ENCODE measurements at regions of chr17 and their contacts with region 1.

Region 1: GRCh38 chr17:41369713-41370112 is at the start of gene KRT33B:
- DNase-seq: no peak
- ATAC-seq: no peak
- H3K4me3 ChIP-seq: no peak within 1 kb of the TSS
- H3K4me3 Mint-ChIP-seq: no peak within 1 kb of the TSS
- H3K27ac ChIP-seq: no peak within 1 kb of the TSS
- H3K27ac Mint-ChIP-seq: peak within 1 kb of the TSS; percentile 7
- H3K4me1 ChIP-seq: peaks cover 2% of the 10 kb centered on the region
- H3K4me1 Mint-ChIP-seq: peaks cover 9% of the 10 kb centered on the region
- H3K27me3 ChIP-seq: no peaks in the 10 kb centered on the region
- H3K27me3 Mint-ChIP-seq: no peaks in the 10 kb centered on the region
- CTCF ChIP-seq: no peak
- total RNA-seq, gene KRT33B: not detected

Region 2: GRCh38 chr17:41352597-41353366 is 16.9 kb before region 1 on chr17:
- CTCF ChIA-PET with region 1: no interaction called
- POLR2A ChIA-PET with region 1: no interaction called
- intact Hi-C with region 1: loop called (anchors 1 kb)
- DNase-seq: no peak
- ATAC-seq: no peak
- H3K4me3 ChIP-seq: no peak overlapping the region
- H3K4me3 Mint-ChIP-seq: no peak overlapping the region
- H3K27ac ChIP-seq: no peak overlapping the region
- H3K27ac Mint-ChIP-seq: no peak overlapping the region
- H3K4me1 ChIP-seq: peaks cover 11% of the 10 kb centered on the region
- H3K4me1 Mint-ChIP-seq: peaks cover 8% of the 10 kb centered on the region
- H3K27me3 ChIP-seq: no peaks in the 10 kb centered on the region
- H3K27me3 Mint-ChIP-seq: no peaks in the 10 kb centered on the region
- CTCF ChIP-seq: no peak